B cell (primary cell): ENCODE measurements at regions of chr1 and their contacts with region 1.

Region 1: GRCh38 chr1:23539698-23540266 is 8.7 kb upstream of the E2F2 start:
- DNase-seq: peak; percentile 98
- ATAC-seq: peak; percentile 91
- H3K4me3 ChIP-seq: peak overlapping the region in 1 of 5 experiments; percentile 5
- H3K4me3 Mint-ChIP-seq: peak overlapping the region; percentile 73
- H3K27ac ChIP-seq: no peak overlapping the region
- H3K27ac Mint-ChIP-seq: peak overlapping the region; percentile 79
- H3K4me1 ChIP-seq: peaks cover 18 to 26% of the 10 kb centered on the region in 2 donors
- H3K4me1 Mint-ChIP-seq: peaks cover 29% of the 10 kb centered on the region
- H3K27me3 ChIP-seq: no peaks in the 10 kb centered on the region
- H3K27me3 Mint-ChIP-seq: no peaks in the 10 kb centered on the region
- CTCF ChIP-seq: peak; percentile 91

Region 2: GRCh38 chr1:23122023-23122748 is 417.6 kb before region 1 on chr1:
- CTCF ChIA-PET with region 1: no interaction called
- POLR2A ChIA-PET with region 1: no interaction called
- intact Hi-C with region 1: no loop called
- DNase-seq: no peak
- ATAC-seq: no peak
- H3K4me3 ChIP-seq: no peak overlapping the region
- H3K4me3 Mint-ChIP-seq: no peak overlapping the region
- H3K27ac ChIP-seq: no peak overlapping the region
- H3K27ac Mint-ChIP-seq: no peak overlapping the region
- H3K4me1 ChIP-seq: peaks cover 6 to 11% of the 10 kb centered on the region in 2 donors
- H3K4me1 Mint-ChIP-seq: peaks cover 22% of the 10 kb centered on the region
- H3K27me3 ChIP-seq: no peaks in the 10 kb centered on the region
- H3K27me3 Mint-ChIP-seq: no peaks in the 10 kb centered on the region
- CTCF ChIP-seq: no peak

Region 3: GRCh38 chr1:23168457-23169194 is 371.2 kb before region 1 on chr1 and contains the start of gene LUZP1:
- CTCF ChIA-PET with region 1: no interaction called
- POLR2A ChIA-PET with region 1: no interaction called
- intact Hi-C with region 1: loop called (anchors 10 kb)
- DNase-seq: peak; percentile 89
- ATAC-seq: peak; percentile 89
- H3K4me3 ChIP-seq: peak within 1 kb of the TSS; percentile 68 to 99 (median 80)
- H3K4me3 Mint-ChIP-seq: peak within 1 kb of the TSS; percentile 93
- H3K27ac ChIP-seq: peak within 1 kb of the TSS; percentile 32 to 69
- H3K27ac Mint-ChIP-seq: peak within 1 kb of the TSS; percentile 89
- H3K4me1 ChIP-seq: peaks cover 19 to 23% of the 10 kb centered on the region in 2 donors
- H3K4me1 Mint-ChIP-seq: peaks cover 25% of the 10 kb centered on the region
- H3K27me3 ChIP-seq: no peaks in the 10 kb centered on the region
- H3K27me3 Mint-ChIP-seq: no peaks in the 10 kb centered on the region
- CTCF ChIP-seq: no peak
- total RNA-seq, gene LUZP1: 12.8 and 12.9 TPM in 2 replicates

Region 4: GRCh38 chr1:23524716-23525401 is 14.9 kb before region 1 on chr1:
- CTCF ChIA-PET with region 1: interaction called, 66 read pairs
- POLR2A ChIA-PET with region 1: interaction called, 10 read pairs
- intact Hi-C with region 1: loop called (anchors 2 kb)
- DNase-seq: peak; percentile 61
- ATAC-seq: peak; percentile 63
- H3K4me3 ChIP-seq: peak overlapping the region in 4 of 5 experiments; percentile 11 to 44 (median 22)
- H3K4me3 Mint-ChIP-seq: peak overlapping the region; percentile 72
- H3K27ac ChIP-seq: peak overlapping the region; percentile 76 to 83
- H3K27ac Mint-ChIP-seq: peak overlapping the region; percentile 90
- H3K4me1 ChIP-seq: peaks cover 72 to 83% of the 10 kb centered on the region in 2 donors
- H3K4me1 Mint-ChIP-seq: peaks cover 81% of the 10 kb centered on the region
- H3K27me3 ChIP-seq: peaks cover 0 to 3% (median 0%) of the 10 kb centered on the region in 4 experiments
- H3K27me3 Mint-ChIP-seq: no peaks in the 10 kb centered on the region
- CTCF ChIP-seq: no peak

Region 5: GRCh38 chr1:23577056-23578004 is 37.5 kb after region 1 on chr1:
- CTCF ChIA-PET with region 1: interaction called, 25 read pairs
- POLR2A ChIA-PET with region 1: no interaction called
- intact Hi-C with region 1: no loop called
- DNase-seq: peak; percentile 80
- ATAC-seq: peak; percentile 85
- H3K4me3 ChIP-seq: peak overlapping the region in 4 of 5 experiments; percentile 13 to 53 (median 20)
- H3K4me3 Mint-ChIP-seq: peak overlapping the region; percentile 83
- H3K27ac ChIP-seq: peak overlapping the region; percentile 75 to 83
- H3K27ac Mint-ChIP-seq: peak overlapping the region; percentile 98
- H3K4me1 ChIP-seq: peaks cover 78 to 85% of the 10 kb centered on the region in 2 donors
- H3K4me1 Mint-ChIP-seq: peaks cover 85% of the 10 kb centered on the region
- H3K27me3 ChIP-seq: no peaks in the 10 kb centered on the region
- H3K27me3 Mint-ChIP-seq: no peaks in the 10 kb centered on the region
- CTCF ChIP-seq: no peak

Region 6: DNA sequence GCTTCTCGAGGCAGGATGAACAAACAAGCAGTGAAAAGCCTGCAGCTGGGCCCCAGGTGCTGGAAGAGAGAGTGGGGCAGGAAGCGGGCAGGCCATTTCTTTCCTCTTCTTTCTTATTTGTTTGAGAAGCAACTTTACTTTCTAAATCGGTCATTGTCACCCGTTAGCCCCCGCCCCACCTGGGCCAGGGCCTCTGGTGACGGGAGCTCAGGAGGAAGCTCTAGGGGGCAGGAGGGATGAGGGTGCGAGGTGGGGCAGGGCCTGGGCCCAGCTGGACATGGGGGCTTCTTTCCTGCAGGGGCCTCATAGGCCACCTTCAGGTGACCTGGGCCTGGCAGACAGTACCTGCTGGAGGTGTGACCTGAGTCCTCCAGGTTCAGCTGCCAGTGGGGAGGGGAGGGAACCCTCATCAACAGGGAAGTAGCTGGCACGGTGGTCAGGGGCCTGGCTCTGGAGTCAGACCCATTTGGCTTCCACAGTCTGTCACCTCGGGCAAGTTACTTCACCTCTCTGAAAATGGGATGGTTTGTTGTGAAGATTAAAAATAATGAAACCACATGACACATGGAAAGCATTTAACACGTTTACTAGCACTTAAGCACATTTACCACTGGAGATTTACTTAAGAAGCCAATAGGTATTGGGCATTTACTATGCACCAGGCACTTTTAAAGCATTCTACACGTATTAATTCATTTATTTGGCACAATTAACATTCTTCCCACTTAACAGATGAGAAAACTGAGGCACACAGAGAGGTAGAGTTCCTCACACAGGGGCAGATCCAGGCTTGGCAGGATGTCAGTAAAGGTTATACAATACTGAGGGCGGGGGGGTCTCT is 73.6 kb after region 1 on chr1:
- CTCF ChIA-PET with region 1: interaction called, 46 read pairs
- POLR2A ChIA-PET with region 1: interaction called, 4 read pairs
- intact Hi-C with region 1: no loop called
- DNase-seq: peak; percentile 62
- ATAC-seq: peak; percentile 52
- H3K4me3 ChIP-seq: no peak overlapping the region
- H3K4me3 Mint-ChIP-seq: peak overlapping the region; percentile 75
- H3K27ac ChIP-seq: peak overlapping the region; percentile 76 to 88
- H3K27ac Mint-ChIP-seq: peak overlapping the region; percentile 86
- H3K4me1 ChIP-seq: peaks cover 62 to 76% of the 10 kb centered on the region in 2 donors
- H3K4me1 Mint-ChIP-seq: peaks cover 79% of the 10 kb centered on the region
- H3K27me3 ChIP-seq: no peaks in the 10 kb centered on the region
- H3K27me3 Mint-ChIP-seq: no peaks in the 10 kb centered on the region
- CTCF ChIP-seq: no peak

Region 7: DNA sequence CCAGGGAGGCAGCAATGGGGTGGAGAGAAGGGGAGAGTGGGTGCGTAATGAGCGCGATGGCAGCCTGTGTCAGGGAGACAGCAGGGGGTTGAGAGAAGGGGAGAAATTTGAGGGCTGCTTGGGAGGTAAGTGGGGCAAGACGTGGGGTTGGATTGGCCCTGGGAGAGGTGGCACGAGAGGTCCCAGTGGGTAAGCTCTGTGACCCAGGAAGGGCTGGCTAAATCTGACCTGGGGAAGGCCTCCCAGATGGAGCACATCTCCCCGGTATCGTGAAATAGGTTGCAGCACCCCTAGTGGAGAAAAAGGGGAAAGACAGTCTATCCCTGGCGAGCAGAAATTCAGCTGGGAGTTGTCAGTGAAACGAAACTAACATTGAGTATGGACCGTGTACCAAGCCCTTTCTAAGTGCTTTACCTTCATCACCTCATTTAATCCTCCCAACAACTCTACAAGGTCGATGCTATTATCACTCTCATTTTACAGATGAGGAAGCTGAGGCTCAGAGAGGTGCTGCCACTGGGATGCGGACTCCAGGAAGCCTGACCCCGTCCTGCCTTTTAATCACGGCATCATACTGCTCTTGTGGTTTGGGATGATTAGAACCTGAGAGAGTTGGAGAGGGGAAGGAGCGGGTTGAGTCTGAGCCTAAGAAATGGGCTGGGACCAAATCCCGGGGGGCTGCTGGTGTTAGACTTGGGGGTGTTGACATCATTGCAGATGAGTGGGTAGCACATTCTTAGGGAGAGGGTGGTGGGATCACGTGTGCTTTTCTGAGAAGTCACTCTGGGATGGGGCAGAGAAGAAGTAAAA is 95.3 kb after region 1 on chr1:
- CTCF ChIA-PET with region 1: interaction called, 1,420 read pairs
- POLR2A ChIA-PET with region 1: interaction called, 46 read pairs
- intact Hi-C with region 1: loop called (anchors 1 kb)
- DNase-seq: peak; percentile 84
- ATAC-seq: peak; percentile 87
- H3K4me3 ChIP-seq: peak overlapping the region in 4 of 5 experiments; percentile 18 to 66 (median 46)
- H3K4me3 Mint-ChIP-seq: peak overlapping the region; percentile 78
- H3K27ac ChIP-seq: peak overlapping the region; percentile 43 to 74
- H3K27ac Mint-ChIP-seq: peak overlapping the region; percentile 94
- H3K4me1 ChIP-seq: peaks cover 29 to 50% of the 10 kb centered on the region in 2 donors
- H3K4me1 Mint-ChIP-seq: peaks cover 51% of the 10 kb centered on the region
- H3K27me3 ChIP-seq: no peaks in the 10 kb centered on the region
- H3K27me3 Mint-ChIP-seq: no peaks in the 10 kb centered on the region
- CTCF ChIP-seq: peak; percentile 86